CD4-positive, alpha-beta T cell (primary cell): ENCODE measurements at regions of chr19 and their contacts with region 1.

Region 1: GRCh38 chr19:35716801-35717666 is 769 bp upstream of the KMT2B start:
- DNase-seq: peak; percentile 92 to 99 (median 96)
- ATAC-seq: peak; percentile 85
- H3K4me3 ChIP-seq: peak overlapping the region; percentile 96
- H3K4me3 Mint-ChIP-seq: peak overlapping the region; percentile 93
- H3K27ac ChIP-seq: peak overlapping the region; percentile 73 to 76
- H3K27ac Mint-ChIP-seq: peak overlapping the region; percentile 89
- H3K4me1 ChIP-seq: peaks cover 71% of the 10 kb centered on the region
- H3K4me1 Mint-ChIP-seq: peaks cover 70% of the 10 kb centered on the region
- H3K27me3 ChIP-seq: no peaks in the 10 kb centered on the region
- H3K27me3 Mint-ChIP-seq: no peaks in the 10 kb centered on the region
- CTCF ChIP-seq: peak; percentile 95

Region 2: GRCh38 chr19:35269421-35270117 is 447.5 kb before region 1 on chr19:
- CTCF ChIA-PET with region 1: no interaction called
- POLR2A ChIA-PET with region 1: no interaction called
- intact Hi-C with region 1: loop called in 1 of 2 experiments (anchors 10 kb)
- DNase-seq: peak; percentile 63 to 90 (median 74)
- ATAC-seq: peak; percentile 46
- H3K4me3 ChIP-seq: peak overlapping the region; percentile 32
- H3K4me3 Mint-ChIP-seq: peak overlapping the region; percentile 83
- H3K27ac ChIP-seq: peak overlapping the region in 1 of 2 donors; percentile 65
- H3K27ac Mint-ChIP-seq: peak overlapping the region; percentile 81
- H3K4me1 ChIP-seq: peaks cover 54% of the 10 kb centered on the region
- H3K4me1 Mint-ChIP-seq: peaks cover 41% of the 10 kb centered on the region
- H3K27me3 ChIP-seq: no peaks in the 10 kb centered on the region
- H3K27me3 Mint-ChIP-seq: no peaks in the 10 kb centered on the region
- CTCF ChIP-seq: peak; percentile 77

Region 3: DNA sequence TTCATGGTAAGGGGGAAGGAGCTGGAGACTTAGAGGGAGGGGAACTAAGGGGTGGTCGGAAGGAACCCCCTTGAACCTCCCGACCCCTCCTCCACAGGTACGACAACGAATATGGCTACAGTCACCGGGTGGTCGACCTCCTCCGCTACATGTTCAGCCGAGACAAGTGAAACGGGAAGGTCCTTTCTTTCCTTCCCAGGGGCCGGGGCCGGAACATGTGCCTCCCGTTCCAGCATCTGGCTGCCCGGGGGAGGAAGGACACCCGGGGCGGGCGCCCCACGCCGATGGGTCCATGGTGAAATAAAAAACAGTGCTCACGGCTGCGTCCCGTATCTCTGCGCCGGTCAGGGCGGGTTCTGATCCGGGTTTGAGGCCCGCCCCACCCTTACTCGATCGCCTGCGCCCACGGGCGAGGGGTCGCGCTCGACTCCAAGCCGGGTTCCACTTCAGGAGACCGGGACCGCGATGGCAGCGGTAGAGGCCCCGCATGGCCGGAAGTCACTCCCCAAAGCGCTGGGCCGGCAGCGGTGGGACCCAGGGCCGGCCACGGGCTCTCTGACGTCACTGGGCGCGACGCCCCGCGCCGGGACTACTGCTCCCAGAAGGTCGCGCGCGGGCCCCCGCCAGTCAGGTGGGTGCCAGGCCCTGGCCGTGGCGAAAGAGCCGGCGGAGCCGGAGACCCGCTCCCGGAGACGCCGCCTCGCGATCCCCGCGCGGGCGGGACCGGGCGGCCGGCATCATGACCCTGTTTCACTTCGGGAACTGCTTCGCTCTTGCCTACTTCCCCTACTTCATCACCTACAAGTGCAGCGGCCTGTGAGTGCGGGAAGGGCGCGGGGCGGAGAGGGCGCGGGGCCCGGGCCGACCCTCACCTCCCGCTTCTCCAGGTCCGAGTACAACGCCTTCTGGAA is 171.8 kb before region 1 on chr19 and contains the start of gene TMEM147:
- CTCF ChIA-PET with region 1: no interaction called
- POLR2A ChIA-PET with region 1: no interaction called
- intact Hi-C with region 1: loop called in 1 of 2 experiments (anchors 2 kb)
- DNase-seq: peak; percentile 45 to 86 (median 73)
- ATAC-seq: peak; percentile 85
- H3K4me3 ChIP-seq: peak within 1 kb of the TSS; percentile 93
- H3K4me3 Mint-ChIP-seq: peak within 1 kb of the TSS; percentile 94
- H3K27ac ChIP-seq: peak within 1 kb of the TSS; percentile 64 to 90
- H3K27ac Mint-ChIP-seq: peak within 1 kb of the TSS; percentile 93
- H3K4me1 ChIP-seq: peaks cover 40% of the 10 kb centered on the region
- H3K4me1 Mint-ChIP-seq: peaks cover 36% of the 10 kb centered on the region
- H3K27me3 ChIP-seq: no peaks in the 10 kb centered on the region
- H3K27me3 Mint-ChIP-seq: no peaks in the 10 kb centered on the region
- CTCF ChIP-seq: no peak
- total RNA-seq, gene TMEM147: 20.3 to 22.0 TPM

Region 4: GRCh38 chr19:35693830-35694599 is 23.0 kb before region 1 on chr19:
- CTCF ChIA-PET with region 1: interaction called, 4 read pairs
- POLR2A ChIA-PET with region 1: interaction called, 3 read pairs
- intact Hi-C with region 1: loop called (anchors 1 kb)
- DNase-seq: peak; percentile 85 to 94 (median 89)
- ATAC-seq: peak; percentile 100
- H3K4me3 ChIP-seq: no peak overlapping the region
- H3K4me3 Mint-ChIP-seq: no peak overlapping the region
- H3K27ac ChIP-seq: no peak overlapping the region
- H3K27ac Mint-ChIP-seq: no peak overlapping the region
- H3K4me1 ChIP-seq: peaks cover 5% of the 10 kb centered on the region
- H3K4me1 Mint-ChIP-seq: no peaks in the 10 kb centered on the region
- H3K27me3 ChIP-seq: no peaks in the 10 kb centered on the region
- H3K27me3 Mint-ChIP-seq: no peaks in the 10 kb centered on the region
- CTCF ChIP-seq: peak; percentile 97

Region 5: GRCh38 chr19:35740423-35741202 is 23.6 kb after region 1 on chr19:
- CTCF ChIA-PET with region 1: interaction called, 3 read pairs
- POLR2A ChIA-PET with region 1: interaction called, 20 read pairs
- intact Hi-C with region 1: loop called (anchors 1 kb)
- DNase-seq: peak; percentile 88 to 97 (median 94)
- ATAC-seq: peak; percentile 60
- H3K4me3 ChIP-seq: peak overlapping the region; percentile 91
- H3K4me3 Mint-ChIP-seq: peak overlapping the region; percentile 99
- H3K27ac ChIP-seq: peak overlapping the region; percentile 62 to 72
- H3K27ac Mint-ChIP-seq: peak overlapping the region; percentile 98
- H3K4me1 ChIP-seq: peaks cover 68% of the 10 kb centered on the region
- H3K4me1 Mint-ChIP-seq: peaks cover 52% of the 10 kb centered on the region
- H3K27me3 ChIP-seq: no peaks in the 10 kb centered on the region
- H3K27me3 Mint-ChIP-seq: no peaks in the 10 kb centered on the region
- CTCF ChIP-seq: no peak

Region 6: GRCh38 chr19:35757749-35758608 is 40.9 kb after region 1 on chr19 and contains the start of gene PROSER3:
- CTCF ChIA-PET with region 1: no interaction called
- POLR2A ChIA-PET with region 1: no interaction called
- intact Hi-C with region 1: loop called (anchors 1 to 5 kb)
- DNase-seq: peak; percentile 95 to 100 (median 98)
- ATAC-seq: peak; percentile 96
- H3K4me3 ChIP-seq: peak within 1 kb of the TSS; percentile 81
- H3K4me3 Mint-ChIP-seq: peak within 1 kb of the TSS; percentile 99
- H3K27ac ChIP-seq: peak within 1 kb of the TSS; percentile 61 to 97
- H3K27ac Mint-ChIP-seq: peak within 1 kb of the TSS; percentile 88
- H3K4me1 ChIP-seq: peaks cover 43% of the 10 kb centered on the region
- H3K4me1 Mint-ChIP-seq: peaks cover 41% of the 10 kb centered on the region
- H3K27me3 ChIP-seq: peaks cover 0 to 2% of the 10 kb centered on the region in 2 experiments
- H3K27me3 Mint-ChIP-seq: peaks cover 15% of the 10 kb centered on the region
- CTCF ChIP-seq: no peak
- total RNA-seq, gene PROSER3: 19.4 to 22.6 TPM